ENCODE measurements at regions of chr2 and their contacts with region 1.

Region 1: DNA sequence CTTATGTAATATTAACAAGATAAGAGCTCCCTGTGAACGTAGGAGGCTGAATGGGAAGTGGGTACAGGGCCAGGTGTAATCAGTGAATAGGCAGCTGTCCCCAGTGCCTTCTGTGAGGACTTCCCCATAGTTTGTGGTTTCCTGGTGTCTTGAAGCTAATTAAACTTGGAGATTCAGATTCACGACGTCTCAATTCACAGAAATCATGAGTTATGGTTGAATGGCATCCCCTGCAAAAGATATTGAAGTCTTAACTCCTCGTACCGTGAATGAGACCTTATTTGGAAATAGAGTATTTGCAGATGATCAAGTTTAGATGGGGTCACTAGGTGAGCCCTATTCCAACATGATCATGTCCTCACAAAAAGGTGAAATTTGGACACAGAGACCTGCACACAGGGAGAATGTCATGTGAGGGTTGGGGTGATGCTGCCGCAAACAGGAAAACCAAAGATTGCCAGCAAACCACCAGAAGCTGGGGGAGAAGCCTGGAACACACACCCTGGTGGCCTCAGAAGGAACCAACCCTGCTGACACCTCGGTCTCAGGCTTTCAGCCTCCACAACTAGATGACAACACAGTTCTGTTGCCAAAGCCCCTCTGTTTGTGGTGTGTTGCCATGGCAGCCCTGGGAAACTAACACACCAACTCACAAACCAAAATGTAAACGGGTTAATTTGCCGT is 13.2 kb downstream of the ARL4C start:
- DNase-seq: peak; percentile 86 to 95
- ATAC-seq: peak; percentile 78 to 89 (median 86)
- H3K4me3 ChIP-seq: no peak overlapping the region
- H3K4me3 Mint-ChIP-seq: peak overlapping the region; percentile 80
- H3K27ac ChIP-seq: peak overlapping the region; percentile 96
- H3K27ac Mint-ChIP-seq: peak overlapping the region; percentile 95 to 99
- H3K4me1 ChIP-seq: peaks cover 69% of the 10 kb centered on the region
- H3K4me1 Mint-ChIP-seq: peaks cover 67 to 76% of the 10 kb centered on the region in 2 donors
- H3K27me3 ChIP-seq: no peaks in the 10 kb centered on the region
- H3K27me3 Mint-ChIP-seq: no peaks in the 10 kb centered on the region
- CTCF ChIP-seq: peak; percentile 47

Region 2: DNA sequence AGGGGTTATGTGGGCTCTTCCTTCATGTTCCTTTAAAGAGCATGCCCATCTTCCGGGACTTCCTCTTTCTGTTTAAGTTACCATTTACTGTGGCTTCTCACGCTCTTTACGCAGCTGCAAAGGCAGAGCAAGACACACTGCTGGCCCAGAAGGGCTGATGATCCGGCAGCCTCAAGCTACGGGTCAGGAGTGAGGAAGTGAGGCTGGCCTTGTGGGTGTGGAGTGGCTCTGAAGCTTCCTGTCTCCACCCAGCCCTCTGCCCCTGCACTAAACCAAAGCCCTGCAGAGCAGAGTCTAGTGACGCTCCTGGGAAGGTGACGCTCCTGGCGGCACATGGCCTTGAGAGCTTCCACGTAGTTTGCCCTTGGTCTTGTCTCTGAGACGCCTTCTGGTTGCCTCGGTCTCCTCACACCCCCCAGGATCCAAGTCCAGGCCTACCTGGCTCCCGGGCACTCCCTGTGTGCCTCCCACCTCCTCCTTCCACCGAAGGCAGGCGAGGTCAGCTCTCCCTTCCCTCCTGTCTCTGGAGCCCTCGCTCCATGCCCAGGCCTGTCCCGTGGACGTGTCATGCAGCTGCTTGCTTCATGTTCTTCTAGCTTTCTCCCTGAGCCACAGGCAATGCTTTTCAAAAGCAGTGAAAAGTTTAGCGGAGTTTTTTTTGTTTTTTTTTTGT is 37.2 kb before region 1 on chr2:
- intact Hi-C with region 1: loop called (anchors 1 kb)
- DNase-seq: peak; percentile 76 to 94
- ATAC-seq: peak; percentile 89 to 95 (median 92)
- H3K4me3 ChIP-seq: no peak overlapping the region
- H3K4me3 Mint-ChIP-seq: peak overlapping the region; percentile 82
- H3K27ac ChIP-seq: peak overlapping the region; percentile 97
- H3K27ac Mint-ChIP-seq: peak overlapping the region; percentile 98 to 99
- H3K4me1 ChIP-seq: peaks cover 52% of the 10 kb centered on the region
- H3K4me1 Mint-ChIP-seq: peaks cover 69 to 71% of the 10 kb centered on the region in 2 donors
- H3K27me3 ChIP-seq: no peaks in the 10 kb centered on the region
- H3K27me3 Mint-ChIP-seq: no peaks in the 10 kb centered on the region
- CTCF ChIP-seq: no peak

Region 3: GRCh38 chr2:234494361-234495250 is 10.9 kb after region 1 on chr2:
- intact Hi-C with region 1: loop called (anchors 1 kb)
- DNase-seq: peak in 1 of 2 donors; percentile 77
- ATAC-seq: no peak
- H3K4me3 ChIP-seq: peak overlapping the region; percentile 86
- H3K4me3 Mint-ChIP-seq: peak overlapping the region; percentile 100
- H3K27ac ChIP-seq: peak overlapping the region; percentile 94
- H3K27ac Mint-ChIP-seq: peak overlapping the region; percentile 95 to 99
- H3K4me1 ChIP-seq: peaks cover 48% of the 10 kb centered on the region
- H3K4me1 Mint-ChIP-seq: peaks cover 64 to 73% of the 10 kb centered on the region in 2 donors
- H3K27me3 ChIP-seq: no peaks in the 10 kb centered on the region
- H3K27me3 Mint-ChIP-seq: no peaks in the 10 kb centered on the region
- CTCF ChIP-seq: no peak

Region 4: DNA sequence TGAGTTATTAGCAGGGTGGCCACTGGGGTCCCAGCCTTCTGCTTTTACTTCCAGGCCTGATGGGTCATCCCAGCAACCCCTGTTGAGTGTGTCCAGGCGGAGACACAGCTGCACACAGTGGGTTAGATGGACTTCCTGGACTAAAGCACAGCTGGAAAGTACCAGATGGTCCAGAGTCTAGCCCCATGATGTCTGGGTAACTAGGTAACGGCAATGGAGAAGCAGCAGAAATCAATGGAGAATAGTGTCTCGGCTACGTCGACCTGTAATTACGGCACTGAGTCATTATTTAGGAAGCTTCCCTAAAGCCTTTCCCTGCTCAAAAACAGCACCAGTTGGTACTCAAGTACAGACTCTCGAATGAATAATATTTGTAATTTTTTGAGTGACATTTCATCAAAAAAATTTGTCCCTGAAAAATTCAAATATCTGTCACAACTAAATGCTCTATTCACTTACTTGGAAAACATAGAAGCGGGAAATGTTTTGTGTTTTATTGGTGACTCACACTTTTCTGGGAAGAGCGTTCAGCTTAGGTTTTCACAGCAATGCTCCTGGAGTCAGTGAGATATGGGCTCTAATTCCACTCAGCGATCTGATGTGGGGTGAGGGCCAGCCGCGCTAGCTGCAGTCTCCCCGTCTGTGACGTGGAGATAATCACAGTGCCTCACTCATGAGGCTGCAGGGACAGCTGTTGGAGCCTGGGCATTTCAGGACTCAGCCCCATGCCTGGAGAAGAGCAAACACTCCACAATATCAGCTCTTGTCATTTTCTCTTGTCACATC is 29.4 kb after region 1 on chr2:
- intact Hi-C with region 1: no loop called
- DNase-seq: no peak
- ATAC-seq: no peak
- H3K4me3 ChIP-seq: no peak overlapping the region
- H3K4me3 Mint-ChIP-seq: no peak overlapping the region
- H3K27ac ChIP-seq: no peak overlapping the region
- H3K27ac Mint-ChIP-seq: no peak overlapping the region
- H3K4me1 ChIP-seq: no peaks in the 10 kb centered on the region
- H3K4me1 Mint-ChIP-seq: no peaks in the 10 kb centered on the region
- H3K27me3 ChIP-seq: no peaks in the 10 kb centered on the region
- H3K27me3 Mint-ChIP-seq: peaks cover 6 to 18% of the 10 kb centered on the region in 2 donors
- CTCF ChIP-seq: no peak